AG04449 (cell line): ENCODE measurements at regions of chr2 and their contacts with region 1.

Region 1: GRCh38 chr2:86221066-86221684 is 21.9 kb downstream of the MRPL35 start:
- DNase-seq: no peak
- H3K4me3 ChIP-seq: no peak overlapping the region
- CTCF ChIP-seq: peak; percentile 76

Region 2: DNA sequence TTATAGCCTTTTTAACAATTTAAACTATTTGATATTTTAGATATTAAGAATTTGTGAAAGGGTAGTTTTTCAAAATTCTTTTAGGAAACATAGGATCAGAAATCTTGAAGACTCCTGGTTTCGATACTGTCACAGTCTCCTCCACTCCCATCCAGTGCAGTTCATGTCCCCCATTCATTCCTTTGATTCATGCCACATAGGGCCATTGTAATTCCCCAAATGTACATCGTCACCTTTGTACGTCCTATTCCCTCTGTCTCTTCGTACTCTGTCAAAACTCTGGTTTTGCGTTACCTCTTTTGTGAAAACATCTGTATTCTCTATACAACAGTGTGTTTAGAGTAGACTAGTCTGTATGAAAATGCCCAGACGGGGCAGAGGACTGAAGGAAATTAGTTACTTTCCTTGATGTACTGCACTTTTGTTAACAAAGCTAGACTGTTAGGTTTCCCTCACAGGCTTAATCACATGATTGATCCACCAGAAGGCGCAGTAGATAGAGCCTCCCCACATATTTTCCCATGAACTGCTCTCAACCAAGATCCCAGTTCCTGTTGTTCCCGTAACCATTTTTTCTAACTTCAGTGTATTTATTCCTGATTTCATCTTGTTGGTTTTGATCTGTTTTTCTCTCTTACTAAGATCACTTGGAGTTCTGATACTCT is 19.4 kb before region 1 on chr2:
- CTCF ChIA-PET with region 1: interaction called, 12 read pairs
- POLR2A ChIA-PET with region 1: no interaction called
- DNase-seq: no peak
- H3K4me3 ChIP-seq: no peak overlapping the region
- CTCF ChIP-seq: no peak

Region 3: DNA sequence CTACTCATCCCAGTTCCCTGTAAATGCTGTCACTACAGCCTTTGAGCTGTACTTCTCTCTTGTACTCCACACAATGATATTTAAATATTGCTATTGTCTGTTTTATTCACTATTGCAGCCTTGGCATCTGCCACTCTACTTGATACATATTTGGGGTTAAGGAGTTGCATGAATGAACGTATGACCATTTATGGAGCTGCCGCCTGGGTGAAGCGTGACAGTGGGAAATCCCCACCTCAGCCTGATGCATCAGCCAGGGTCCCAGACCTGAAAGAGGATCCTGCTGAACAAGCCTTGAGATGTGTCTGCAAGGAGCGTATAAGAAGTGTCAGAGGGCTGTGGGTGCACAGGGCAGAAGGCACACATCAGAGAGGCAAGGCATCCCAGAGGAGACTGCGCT is 17.2 kb after region 1 on chr2:
- CTCF ChIA-PET with region 1: interaction called, 12 read pairs
- POLR2A ChIA-PET with region 1: no interaction called
- DNase-seq: no peak
- H3K4me3 ChIP-seq: no peak overlapping the region
- CTCF ChIP-seq: no peak

Region 4: DNA sequence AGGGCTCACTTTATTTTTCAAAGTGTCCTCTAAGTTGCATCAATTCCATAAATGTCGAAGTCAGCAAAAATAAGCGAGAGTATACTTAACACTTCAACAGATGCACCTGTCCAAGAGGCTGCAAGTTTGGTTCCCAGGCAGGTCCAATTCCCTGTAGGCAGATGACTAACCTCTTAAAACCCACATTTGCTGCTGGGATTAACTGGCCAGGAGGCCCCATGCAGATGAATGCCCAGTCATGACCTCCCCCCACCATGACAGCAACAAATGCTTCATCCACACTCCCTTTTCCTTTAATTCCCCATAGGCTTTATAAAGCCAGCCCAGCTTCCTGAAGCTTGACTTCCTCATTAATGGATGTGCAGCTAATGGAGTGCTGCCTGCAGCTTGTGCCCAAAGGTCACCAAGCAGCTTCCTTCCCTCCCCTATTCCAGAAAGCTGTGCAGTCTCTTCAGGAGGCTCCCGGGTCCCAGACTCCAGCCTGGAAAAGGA is 80.6 kb after region 1 on chr2:
- CTCF ChIA-PET with region 1: no interaction called
- POLR2A ChIA-PET with region 1: no interaction called
- DNase-seq: no peak
- H3K4me3 ChIP-seq: no peak overlapping the region
- CTCF ChIP-seq: no peak

Region 5: DNA sequence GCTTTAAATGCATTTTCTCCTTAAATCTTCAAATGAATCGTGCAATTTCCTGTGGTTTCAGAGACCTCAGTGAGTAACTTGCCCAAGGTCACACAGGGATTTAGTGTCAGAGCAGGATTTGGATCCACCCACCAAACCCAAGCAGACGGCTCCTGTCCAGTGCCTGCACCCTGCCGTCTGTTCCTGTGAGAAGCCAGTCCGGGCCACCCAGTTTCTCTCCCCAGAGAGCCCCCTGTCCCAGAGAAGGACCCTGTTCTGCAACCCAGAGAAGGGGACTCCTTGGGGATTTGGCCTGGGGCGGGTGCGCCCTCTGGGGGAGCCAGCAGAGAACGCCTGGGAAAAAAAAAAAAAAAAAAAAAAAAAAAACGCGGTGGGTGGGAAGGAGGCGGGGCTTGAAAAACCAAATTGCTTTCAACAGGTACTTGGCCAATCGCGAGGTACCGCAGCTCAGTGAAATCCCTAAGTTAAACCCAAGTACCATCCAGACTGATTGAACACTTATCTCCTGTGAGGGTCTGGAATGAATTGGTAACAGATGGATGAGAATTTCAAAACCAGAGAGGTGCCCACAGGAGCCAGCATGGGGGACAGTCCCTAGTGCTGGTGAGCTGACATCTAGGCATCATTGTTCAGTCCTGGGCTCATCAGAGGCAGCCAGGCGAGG is 147.1 kb after region 1 on chr2:
- CTCF ChIA-PET with region 1: interaction called, 195 read pairs
- POLR2A ChIA-PET with region 1: interaction called, 3 read pairs
- DNase-seq: no peak
- H3K4me3 ChIP-seq: no peak overlapping the region
- CTCF ChIP-seq: peak; percentile 45

Region 6: DNA sequence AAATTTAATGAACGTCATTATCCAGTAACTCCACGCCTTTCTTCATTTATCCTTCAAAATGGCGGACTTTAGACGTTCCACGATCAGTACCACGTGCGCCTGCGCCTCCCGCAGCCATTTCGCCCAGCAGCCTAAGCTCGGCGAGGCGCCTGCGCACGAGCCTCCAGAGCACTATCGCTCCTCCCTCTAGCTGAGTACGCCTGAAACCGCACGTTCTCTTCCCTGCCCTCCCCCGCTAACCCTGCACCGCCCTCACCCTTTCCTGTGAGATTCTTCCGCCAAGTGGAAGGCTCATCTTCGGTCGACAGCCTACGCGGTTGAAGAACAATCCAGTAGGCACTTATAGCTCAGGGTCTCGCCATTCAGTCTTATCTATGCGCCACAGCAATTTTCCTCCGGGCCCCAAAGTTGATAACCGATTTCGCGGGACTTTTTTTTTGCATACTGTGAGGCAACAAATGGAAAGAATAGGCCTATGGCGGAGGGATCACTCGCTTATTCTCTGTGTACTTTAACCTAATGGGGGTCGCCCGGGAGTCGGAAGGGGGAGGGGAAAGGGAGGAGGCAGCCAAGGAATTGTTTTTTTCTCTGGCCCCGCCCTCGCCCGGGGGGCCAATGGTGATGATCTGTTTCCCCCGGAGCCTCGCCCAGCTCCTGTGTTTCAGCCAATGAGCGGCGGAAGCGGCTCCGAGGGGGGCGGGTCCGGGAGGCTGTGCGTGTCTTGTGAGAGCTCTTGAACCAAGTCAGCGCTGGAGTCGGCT is 219.6 kb after region 1 on chr2 and contains the start of gene KDM3A:
- CTCF ChIA-PET with region 1: interaction called, 30 read pairs
- POLR2A ChIA-PET with region 1: no interaction called
- DNase-seq: peak; percentile 97
- H3K4me3 ChIP-seq: peak within 1 kb of the TSS; percentile 85
- CTCF ChIP-seq: no peak